PC-3 (cell line): ENCODE measurements at regions of chr7 and their contacts with region 1.

Region 1: DNA sequence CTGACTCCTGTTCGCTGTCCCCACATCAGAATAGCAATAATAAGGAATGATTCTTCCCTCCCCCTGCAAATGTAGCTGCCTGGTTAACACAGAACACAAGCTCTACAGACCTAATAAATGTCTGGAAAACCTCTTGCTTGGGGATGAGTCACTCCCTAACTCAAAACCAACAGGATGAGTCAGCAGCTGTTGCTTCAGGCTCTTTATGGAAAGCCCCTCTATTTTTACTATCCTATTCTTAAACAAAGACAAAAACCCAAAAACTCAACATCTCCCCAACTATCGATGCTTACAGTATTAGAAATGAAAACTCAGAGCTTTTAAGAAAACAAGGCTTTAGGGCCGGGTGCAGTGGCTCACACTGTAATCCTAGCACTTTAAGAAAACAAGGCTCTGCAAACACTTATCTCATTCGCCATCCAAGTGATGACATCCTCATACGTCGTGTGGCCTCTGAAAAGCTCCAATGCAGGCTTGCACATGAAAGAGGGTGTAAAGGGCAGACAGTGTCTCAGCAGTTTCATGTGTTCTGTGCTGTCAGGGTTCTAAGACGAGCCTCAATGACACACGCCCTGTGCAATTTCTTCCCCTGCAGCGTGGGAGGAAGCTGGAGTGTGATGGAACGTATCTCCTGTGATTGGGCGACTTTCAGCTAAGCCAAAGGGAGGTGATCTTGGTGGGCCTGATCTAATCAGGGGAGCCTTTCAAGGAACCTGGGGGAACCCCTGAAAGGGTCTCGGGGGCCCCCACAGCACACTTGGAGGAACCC is 70.1 kb downstream of the AMZ1 start:
- DNase-seq: peak; percentile 93
- ATAC-seq: peak; percentile 84
- H3K4me3 ChIP-seq: peak overlapping the region; percentile 48; the same call in 1 of the 2 replicates
- H3K27ac ChIP-seq: peak overlapping the region; percentile 100
- H3K4me1 ChIP-seq: peaks cover 35% of the 10 kb centered on the region
- H3K27me3 ChIP-seq: no peaks in the 10 kb centered on the region
- CTCF ChIP-seq: no peak

Region 2: DNA sequence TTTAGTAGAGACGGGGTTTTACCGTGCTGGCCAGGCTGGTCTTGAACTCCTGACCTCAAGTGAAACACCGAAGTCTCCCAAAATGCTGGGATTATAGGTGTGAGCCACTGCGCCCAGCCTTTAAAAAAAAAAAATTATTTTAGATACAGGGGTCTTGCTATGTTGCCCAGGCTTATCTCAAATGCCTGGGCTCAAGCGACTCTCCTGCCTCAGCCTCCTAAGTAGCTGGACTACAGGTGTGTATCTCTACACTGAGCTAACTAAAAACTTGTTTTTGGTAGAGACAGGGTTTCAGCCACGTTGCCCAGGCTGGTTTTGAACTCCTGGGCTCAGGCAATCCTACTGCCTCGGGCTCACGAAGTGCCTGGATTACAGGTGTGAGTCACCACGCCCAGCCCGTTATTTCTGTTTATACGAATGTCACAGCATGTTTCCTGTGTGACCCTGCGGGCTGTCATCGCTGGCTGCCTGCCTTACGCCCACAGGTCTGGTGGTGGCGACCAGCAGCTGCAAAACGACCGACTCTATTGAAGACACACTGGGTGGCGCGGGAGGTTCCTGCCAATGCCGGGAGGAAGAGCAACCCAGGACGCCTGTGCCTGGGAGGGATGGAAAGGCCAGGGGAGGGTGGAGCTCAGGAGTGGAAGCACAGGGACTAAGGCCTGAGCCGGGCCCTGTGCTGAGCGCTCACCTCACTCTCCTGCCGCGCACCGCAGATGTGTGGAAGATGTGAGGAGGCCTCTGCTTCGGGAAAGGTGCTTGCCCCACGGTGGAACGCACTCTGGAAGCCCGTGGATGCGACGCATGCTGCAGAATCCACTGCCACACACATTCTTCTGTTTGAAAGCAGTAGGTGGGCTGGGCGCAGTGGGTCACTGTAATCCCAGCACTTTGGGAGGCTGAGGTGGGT is 37.3 kb before region 1 on chr7:
- CTCF ChIA-PET with region 1: interaction called, 14 read pairs
- POLR2A ChIA-PET with region 1: no interaction called
- intact Hi-C with region 1: loop called (anchors 1 kb)
- DNase-seq: peak; percentile 96
- ATAC-seq: peak; percentile 96
- H3K4me3 ChIP-seq: no peak overlapping the region
- H3K27ac ChIP-seq: peak overlapping the region; percentile 45
- H3K4me1 ChIP-seq: 0 out of 2 replicates have a peak, but pooled peaks cover 3% of the 10 kb centered on the region
- H3K27me3 ChIP-seq: no peaks in the 10 kb centered on the region
- CTCF ChIP-seq: peak; percentile 69

Region 3: DNA sequence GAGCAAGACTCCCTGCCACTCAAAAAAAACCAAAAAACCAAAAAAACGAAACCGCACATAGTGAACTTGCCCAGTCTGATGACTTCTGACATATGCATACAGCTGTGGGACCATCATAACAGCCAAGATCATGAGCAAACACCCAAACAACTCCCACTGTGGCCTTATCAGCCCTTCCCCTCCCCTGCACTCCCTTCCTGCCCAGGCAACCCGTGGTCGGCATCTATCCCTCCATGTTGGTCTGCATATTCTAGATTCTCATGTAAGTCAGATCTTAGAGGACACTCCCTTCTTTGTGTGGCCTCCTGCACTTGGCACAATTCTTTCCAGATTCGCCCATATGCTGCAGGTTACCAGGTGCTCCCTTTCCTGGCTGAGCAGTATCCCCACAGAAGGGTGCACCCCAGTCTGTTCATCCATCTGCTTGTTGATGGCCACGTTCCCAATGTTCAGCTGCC is 13.2 kb after region 1 on chr7:
- CTCF ChIA-PET with region 1: interaction called, 3 read pairs
- POLR2A ChIA-PET with region 1: interaction called, 3 read pairs
- intact Hi-C with region 1: loop called (anchors 2 kb)
- DNase-seq: no peak
- ATAC-seq: no peak
- H3K4me3 ChIP-seq: no peak overlapping the region
- H3K27ac ChIP-seq: no peak overlapping the region
- H3K4me1 ChIP-seq: peaks cover 40% of the 10 kb centered on the region
- H3K27me3 ChIP-seq: no peaks in the 10 kb centered on the region
- CTCF ChIP-seq: no peak

Region 4: GRCh38 chr7:2781636-2782035 is 23.5 kb after region 1 on chr7:
- CTCF ChIA-PET with region 1: no interaction called
- POLR2A ChIA-PET with region 1: no interaction called
- intact Hi-C with region 1: no loop called
- DNase-seq: no peak
- ATAC-seq: no peak
- H3K4me3 ChIP-seq: no peak overlapping the region
- H3K27ac ChIP-seq: no peak overlapping the region
- H3K4me1 ChIP-seq: peaks cover 12% of the 10 kb centered on the region; the same call in 1 of the 2 replicates
- H3K27me3 ChIP-seq: no peaks in the 10 kb centered on the region
- CTCF ChIP-seq: no peak

Region 5: DNA sequence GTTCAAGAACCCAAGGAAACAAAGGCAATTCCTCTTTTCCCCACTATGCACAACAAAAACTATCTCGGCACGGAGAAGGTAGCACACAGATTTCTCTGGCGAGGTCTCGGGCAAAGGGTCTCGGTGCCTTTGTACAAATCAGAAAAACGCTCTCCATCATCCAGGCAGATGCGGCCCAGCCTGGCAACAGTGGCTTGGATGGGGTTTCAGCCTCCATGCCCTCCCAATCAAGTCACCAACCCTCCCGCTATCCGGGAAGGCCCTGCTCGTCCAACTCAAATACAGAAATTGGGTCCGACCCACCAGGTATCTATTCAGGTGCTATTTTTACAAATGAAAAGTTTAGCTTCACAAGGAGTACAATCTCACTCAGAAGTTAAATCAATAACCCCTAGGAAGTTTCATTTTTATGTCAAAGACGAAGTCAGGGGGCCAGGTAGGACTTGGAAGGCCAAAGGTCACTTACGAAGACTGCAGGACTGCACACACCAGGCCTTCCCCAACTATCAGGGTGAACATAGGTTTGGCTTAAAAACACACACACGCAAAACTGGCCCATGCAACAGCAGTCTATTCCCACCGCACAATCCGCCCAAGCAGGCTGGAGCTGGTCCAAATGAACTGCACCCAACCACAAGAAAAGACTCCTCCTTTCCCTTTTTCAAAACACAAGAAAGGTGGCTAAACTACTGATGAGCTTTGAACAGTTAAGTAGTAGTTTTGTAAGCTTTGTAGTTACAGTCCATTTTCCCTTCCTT is 43.0 kb after region 1 on chr7:
- CTCF ChIA-PET with region 1: interaction called, 3 read pairs
- POLR2A ChIA-PET with region 1: no interaction called
- intact Hi-C with region 1: loop called (anchors 1 kb)
- DNase-seq: peak; percentile 58
- ATAC-seq: no peak
- H3K4me3 ChIP-seq: peak overlapping the region; percentile 56
- H3K27ac ChIP-seq: peak overlapping the region; percentile 92
- H3K4me1 ChIP-seq: peaks cover 41% of the 10 kb centered on the region
- H3K27me3 ChIP-seq: no peaks in the 10 kb centered on the region
- CTCF ChIP-seq: no peak

Region 6: GRCh38 chr7:2821161-2821841 is 63.2 kb after region 1 on chr7:
- CTCF ChIA-PET with region 1: interaction called, 7 read pairs
- POLR2A ChIA-PET with region 1: interaction called, 3 read pairs
- intact Hi-C with region 1: loop called (anchors 2 kb)
- DNase-seq: peak; percentile 68
- ATAC-seq: peak; percentile 43
- H3K4me3 ChIP-seq: peak overlapping the region; percentile 7; the same call in 1 of the 2 replicates
- H3K27ac ChIP-seq: peak overlapping the region; percentile 92
- H3K4me1 ChIP-seq: peaks cover 45% of the 10 kb centered on the region
- H3K27me3 ChIP-seq: no peaks in the 10 kb centered on the region
- CTCF ChIP-seq: peak; percentile 39; the same call in 1 of the 2 replicates

Region 7: DNA sequence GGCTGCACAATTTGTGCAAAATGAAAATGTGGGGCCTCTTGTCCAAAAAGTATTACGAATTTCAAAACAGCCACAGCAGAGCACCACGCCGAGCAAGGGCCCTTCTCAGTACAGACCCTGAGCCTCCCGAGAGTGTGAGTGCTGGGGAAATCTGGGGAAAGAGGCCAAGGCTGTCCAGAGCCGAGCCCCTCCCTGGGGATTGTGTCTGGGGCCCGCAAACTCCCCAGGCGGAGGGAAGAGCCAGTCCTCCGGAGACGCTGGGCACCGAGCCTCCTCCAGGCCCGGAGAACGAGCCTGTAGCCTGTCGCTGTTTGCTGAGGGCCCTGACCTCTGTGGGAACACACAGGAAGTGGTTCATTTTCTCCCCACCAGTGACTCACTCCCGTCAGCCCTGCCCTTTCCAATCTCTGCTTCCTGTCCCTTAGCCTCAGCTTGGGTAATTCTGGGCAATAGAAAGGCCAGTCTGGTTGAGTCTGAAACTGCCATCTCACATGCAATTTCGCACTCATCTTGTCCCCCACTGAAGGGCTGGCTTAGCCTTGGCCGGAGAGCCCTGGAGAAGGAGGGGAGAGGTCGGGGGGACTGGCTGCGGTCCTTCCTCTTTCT is 105.5 kb after region 1 on chr7:
- CTCF ChIA-PET with region 1: no interaction called
- POLR2A ChIA-PET with region 1: no interaction called
- intact Hi-C with region 1: loop called (anchors 1 kb)
- DNase-seq: peak; percentile 94
- ATAC-seq: peak; percentile 97
- H3K4me3 ChIP-seq: peak overlapping the region; percentile 54
- H3K27ac ChIP-seq: peak overlapping the region; percentile 97
- H3K4me1 ChIP-seq: peaks cover 23% of the 10 kb centered on the region
- H3K27me3 ChIP-seq: no peaks in the 10 kb centered on the region
- CTCF ChIP-seq: no peak